Panc1 (cell line): ENCODE measurements at regions of chr11 and their contacts with region 1.

Region 1: GRCh38 chr11:94183886-94184264 is 55.2 kb downstream of the PANX1 start:
- DNase-seq: peak; percentile 42
- ATAC-seq: peak; percentile 86
- H3K4me3 ChIP-seq: no peak overlapping the region
- H3K27ac ChIP-seq: no peak overlapping the region
- H3K4me1 ChIP-seq: no peaks in the 10 kb centered on the region
- H3K27me3 ChIP-seq: no peaks in the 10 kb centered on the region
- CTCF ChIP-seq: peak; percentile 93

Region 2: GRCh38 chr11:94417386-94417987 is 233.6 kb after region 1 on chr11:
- CTCF ChIA-PET with region 1: no interaction called
- POLR2A ChIA-PET with region 1: no interaction called
- in situ Hi-C with region 1: no loop called
- intact Hi-C with region 1: loop called (anchors 5 kb)
- DNase-seq: no peak
- ATAC-seq: peak; percentile 80
- H3K4me3 ChIP-seq: no peak overlapping the region
- H3K27ac ChIP-seq: no peak overlapping the region
- H3K4me1 ChIP-seq: no peaks in the 10 kb centered on the region
- H3K27me3 ChIP-seq: no peaks in the 10 kb centered on the region
- CTCF ChIP-seq: peak; percentile 64; the same call in 1 of the 2 replicates